ENCODE measurements at regions of chr15 and their contacts with region 1.

Region 1: DNA sequence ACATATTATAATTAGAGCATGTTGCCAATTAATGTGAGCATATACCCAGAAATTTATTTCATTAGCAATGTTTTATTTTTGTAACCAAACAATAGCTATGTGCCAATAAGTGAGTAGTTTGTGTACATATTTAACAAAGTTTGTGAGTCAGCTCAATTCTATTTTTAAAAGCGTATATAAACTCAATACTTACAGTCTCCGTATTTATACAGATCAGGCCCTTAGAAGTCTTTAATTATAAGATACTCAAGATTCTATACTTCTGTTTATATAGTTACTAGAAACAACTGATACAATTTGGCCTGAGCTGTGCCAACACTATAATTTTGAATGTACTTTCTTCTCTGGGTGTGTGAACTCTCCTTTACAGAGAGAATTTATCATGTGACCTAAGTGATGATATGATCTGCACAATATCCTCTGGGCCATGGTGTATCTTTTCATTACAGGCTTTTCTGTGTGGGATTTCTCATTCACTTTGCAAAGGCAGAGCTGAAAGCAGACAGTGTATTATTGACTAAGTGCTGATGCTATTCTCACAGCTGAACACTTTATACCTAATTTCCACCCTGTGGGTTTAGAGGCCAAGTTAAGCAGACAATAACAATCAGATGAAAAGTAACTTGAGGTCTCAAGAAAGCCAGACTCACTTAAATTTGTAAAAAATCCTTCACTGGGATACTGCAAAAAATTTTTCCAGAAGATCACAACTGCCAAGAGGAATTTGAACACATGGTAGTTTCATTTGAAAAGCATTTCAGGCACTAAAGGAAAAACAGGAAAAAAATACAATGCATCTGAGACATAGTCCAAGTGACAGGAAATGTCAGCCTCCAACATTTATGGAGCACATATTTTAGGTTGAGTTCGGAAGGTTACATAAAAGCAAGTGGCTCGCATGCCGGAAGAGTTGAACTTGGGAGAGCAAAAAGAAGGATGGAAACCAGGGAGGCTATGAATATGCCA is 277.9 kb upstream of the SEMA6D start:
- DNase-seq: no peak
- ATAC-seq: peak in 6 of 8 donors; percentile 24 to 78 (median 36)
- H3K4me3 ChIP-seq: no peak overlapping the region
- H3K27ac ChIP-seq: peak overlapping the region in 3 of 10 donors; percentile 3 to 69 (median 4)
- H3K4me1 ChIP-seq: peaks cover 0 to 26% (median 10%) of the 10 kb centered on the region in 9 donors
- H3K27me3 ChIP-seq: no peaks in the 10 kb centered on the region
- CTCF ChIP-seq: no peak

Region 2: DNA sequence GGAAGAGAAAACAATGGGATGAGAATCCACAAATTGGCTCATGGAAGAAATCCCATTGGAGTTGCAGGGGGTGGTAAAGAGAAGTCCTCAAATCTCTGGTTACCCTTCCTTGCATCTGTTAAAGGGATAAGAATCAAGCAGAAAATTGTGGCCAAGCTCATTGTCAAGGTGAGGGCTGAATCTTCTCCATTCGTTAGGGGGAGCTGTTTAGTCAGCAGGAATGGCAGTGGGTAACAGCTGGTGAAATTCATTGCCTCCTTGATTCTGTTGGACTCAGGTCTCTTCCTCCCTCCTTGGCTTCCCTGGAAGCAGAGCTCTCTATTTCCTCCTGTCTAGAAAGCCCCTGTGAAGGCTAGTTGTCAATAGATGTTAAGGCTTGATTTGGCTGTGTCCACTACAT is 65.2 kb before region 1 on chr15:
- intact Hi-C with region 1: loop called in 1 of 10 experiments (anchors 2 kb)
- DNase-seq: no peak
- ATAC-seq: peak in 1 of 8 donors; percentile 33
- H3K4me3 ChIP-seq: no peak overlapping the region
- H3K27ac ChIP-seq: no peak overlapping the region
- H3K4me1 ChIP-seq: no peaks in the 10 kb centered on the region
- H3K27me3 ChIP-seq: no peaks in the 10 kb centered on the region
- CTCF ChIP-seq: peak in 7 of 9 donors; percentile 22 to 45 (median 27)

Region 3: GRCh38 chr15:47397655-47398054 is 41.8 kb before region 1 on chr15:
- intact Hi-C with region 1: loop called in 1 of 10 experiments (anchors 5 kb)
- DNase-seq: no peak
- ATAC-seq: peak in 3 of 8 donors; percentile 33 to 59 (median 41)
- H3K4me3 ChIP-seq: no peak overlapping the region
- H3K27ac ChIP-seq: peak overlapping the region in 3 of 10 donors; percentile 35 to 54 (median 52)
- H3K4me1 ChIP-seq: peaks cover 0 to 31% (median 13%) of the 10 kb centered on the region in 9 donors
- H3K27me3 ChIP-seq: peaks cover 0 to 3% (median 0%) of the 10 kb centered on the region in 7 donors
- CTCF ChIP-seq: no peak

Region 4: GRCh38 chr15:47603026-47603425 is 163.6 kb after region 1 on chr15:
- intact Hi-C with region 1: no loop called
- DNase-seq: no peak
- ATAC-seq: no peak
- H3K4me3 ChIP-seq: no peak overlapping the region
- H3K27ac ChIP-seq: no peak overlapping the region
- H3K4me1 ChIP-seq: peaks cover 0 to 9% (median 5%) of the 10 kb centered on the region in 9 donors
- H3K27me3 ChIP-seq: peaks cover 0 to 40% (median 12%) of the 10 kb centered on the region in 7 donors
- CTCF ChIP-seq: no peak

Measured in heart right ventricle (tissue), 16 donors.